Astrocyte of the spinal cord (primary cell): ENCODE measurements at regions of chr3 and their contacts with region 1.

Region 1: GRCh38 chr3:149752051-149752787 is at the start of gene COMMD2:
- DNase-seq: peak; percentile 88
- H3K4me3 ChIP-seq: peak within 1 kb of the TSS; percentile 92
- CTCF ChIP-seq: peak; percentile 28

Region 2: GRCh38 chr3:149086232-149086988 is 665.8 kb before region 1 on chr3 and contains the start of gene HLTF:
- in situ Hi-C with region 1: no loop called
- DNase-seq: peak; percentile 98
- H3K4me3 ChIP-seq: peak within 1 kb of the TSS; percentile 94
- CTCF ChIP-seq: no peak

Region 3: GRCh38 chr3:149512209-149512782 is 239.9 kb before region 1 on chr3:
- in situ Hi-C with region 1: loop called (anchors 25 kb)
- DNase-seq: peak; percentile 62
- H3K4me3 ChIP-seq: no peak overlapping the region
- CTCF ChIP-seq: peak; percentile 77

Region 4: DNA sequence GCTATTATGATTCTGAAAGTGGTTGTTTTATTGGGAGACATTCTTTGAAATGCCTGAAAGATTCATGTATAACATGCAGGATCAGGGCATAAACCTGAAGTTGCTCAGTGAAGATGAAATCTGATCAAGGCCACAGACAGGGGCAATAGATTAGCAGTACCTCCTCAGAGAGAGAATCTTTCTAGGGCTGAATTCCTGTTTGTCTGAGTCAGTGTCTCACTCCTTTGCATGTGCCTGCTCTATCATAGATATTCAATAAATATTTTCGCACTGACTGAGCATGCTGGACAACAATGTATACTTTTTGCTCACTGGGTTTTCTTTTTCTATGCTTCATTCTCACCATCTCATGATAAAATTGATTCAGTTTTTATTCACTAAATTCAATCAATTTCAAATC is 268.3 kb after region 1 on chr3:
- in situ Hi-C with region 1: no loop called
- DNase-seq: peak; percentile 26
- H3K4me3 ChIP-seq: no peak overlapping the region
- CTCF ChIP-seq: no peak

Region 5: DNA sequence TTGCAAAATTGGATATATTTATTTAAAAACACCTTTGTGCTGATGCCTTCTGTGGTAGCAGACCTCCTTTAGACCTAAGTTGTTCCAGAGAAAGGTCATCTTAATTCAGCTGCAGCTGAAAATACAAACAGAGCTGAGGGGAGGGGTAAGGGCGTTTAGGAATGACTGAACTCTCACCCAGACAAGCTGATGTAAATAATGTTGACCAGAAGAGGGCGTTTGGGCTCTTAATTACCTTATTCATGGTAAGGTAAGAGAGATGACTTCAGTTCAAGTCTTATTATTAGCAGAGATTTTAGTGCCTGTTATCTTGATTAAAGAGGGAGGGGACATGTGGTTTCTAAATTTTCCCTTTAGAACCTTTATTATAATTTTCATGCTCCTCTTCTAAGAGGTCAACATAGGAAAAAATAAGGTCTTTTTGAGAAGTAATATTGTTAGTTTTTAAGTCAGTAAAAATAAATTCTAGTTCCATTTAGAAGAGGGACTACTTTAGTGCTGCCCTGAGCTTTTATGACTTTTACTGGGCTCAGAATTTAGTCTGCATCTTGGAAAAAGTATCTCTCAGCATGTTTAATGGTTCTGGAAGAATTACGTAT is 1404.5 kb after region 1 on chr3:
- in situ Hi-C with region 1: no loop called
- DNase-seq: peak; percentile 65
- H3K4me3 ChIP-seq: no peak overlapping the region
- CTCF ChIP-seq: peak; percentile 62